Cardiac septum (tissue), 1 donor: ENCODE measurements at regions of chrX and their contacts with region 1.

Region 1: GRCh38 chrX:21711129-21711847 is 46.6 kb downstream of the SMPX start:
- DNase-seq: no peak

Region 2: DNA sequence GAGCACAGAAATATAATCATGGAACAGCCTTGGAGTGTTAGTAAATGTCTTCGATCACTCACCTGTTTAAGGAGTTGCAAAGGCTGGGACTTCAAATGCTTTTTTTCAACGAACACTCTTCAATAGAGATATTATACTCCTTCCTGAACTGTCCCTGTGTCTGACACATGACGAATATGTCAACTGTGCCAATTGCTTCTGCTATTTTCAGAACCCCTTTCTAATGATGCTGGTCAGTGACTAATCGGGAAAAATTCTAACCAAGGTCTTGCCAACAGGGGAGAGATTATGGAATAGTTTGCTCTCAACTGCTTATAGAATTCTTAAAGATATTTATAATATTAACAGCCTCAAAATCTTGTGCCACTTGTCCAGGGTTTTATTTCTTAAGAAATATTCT is 44.6 kb before region 1 on chrX:
- intact Hi-C with region 1: loop called (anchors 5 kb)
- DNase-seq: no peak